ENCODE measurements at regions of chr13 and their contacts with region 1.

Region 1: GRCh38 chr13:44583137-44583536 is 7.0 kb upstream of the TSC22D1 start:
- DNase-seq: no peak
- H3K4me3 ChIP-seq: no peak overlapping the region
- H3K27ac ChIP-seq: no peak overlapping the region
- H3K4me1 ChIP-seq: peaks cover 0 to 8% (median 5%) of the 10 kb centered on the region in 4 donors
- H3K27me3 ChIP-seq: no peaks in the 10 kb centered on the region
- CTCF ChIP-seq: no peak
- EP300 ChIP-seq: no peak
- POLR2A ChIP-seq: no peak

Region 2: DNA sequence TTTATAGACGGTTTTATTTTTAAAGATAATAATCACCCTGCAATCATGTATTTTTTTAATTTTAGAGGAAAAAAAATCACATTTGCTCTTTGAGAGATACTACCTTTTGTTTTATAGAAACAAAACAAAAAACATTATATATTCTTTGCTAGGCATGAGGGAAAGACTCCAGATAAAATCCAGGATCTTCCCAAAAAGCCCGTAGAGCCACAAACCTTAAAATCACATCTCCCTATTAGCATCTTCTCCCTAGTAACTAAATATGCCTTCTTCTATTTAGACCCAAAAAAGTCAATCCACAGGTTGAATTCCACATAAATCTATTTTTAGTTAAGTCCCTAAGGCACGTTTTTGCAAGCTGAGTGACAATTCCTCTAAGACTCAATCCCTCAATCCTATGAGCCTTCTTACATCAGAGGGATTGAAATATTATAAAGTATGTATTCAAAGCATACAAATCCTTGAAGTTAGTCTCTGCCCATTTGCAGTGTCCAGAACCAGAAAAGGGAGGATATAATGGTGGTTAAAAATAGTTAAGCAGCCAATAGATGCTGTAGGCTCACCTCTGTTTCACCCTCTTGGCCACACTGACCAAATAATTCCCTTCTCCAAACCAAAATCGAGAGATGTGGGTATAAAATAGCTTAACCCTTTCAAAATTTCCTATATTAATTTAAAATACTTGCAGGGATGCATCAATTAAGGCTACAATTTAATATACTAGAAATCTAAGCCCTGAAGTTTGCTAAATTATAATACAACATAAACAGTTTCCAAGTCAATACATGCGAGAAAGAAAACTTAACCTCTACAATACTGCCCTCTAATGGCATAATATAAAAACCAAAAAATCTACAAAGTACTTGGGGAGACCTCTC is 145.5 kb before region 1 on chr13:
- in situ Hi-C with region 1: no loop called
- intact Hi-C with region 1: no loop called
- DNase-seq: no peak
- H3K4me3 ChIP-seq: peak overlapping the region in 3 of 4 donors; percentile 51 to 65 (median 52)
- H3K27ac ChIP-seq: peak overlapping the region; percentile 87 to 92 (median 90)
- H3K4me1 ChIP-seq: peaks cover 3 to 39% (median 30%) of the 10 kb centered on the region in 4 donors
- H3K27me3 ChIP-seq: no peaks in the 10 kb centered on the region
- CTCF ChIP-seq: peak; percentile 50 to 71 (median 58)
- EP300 ChIP-seq: no peak
- POLR2A ChIP-seq: no peak

Region 3: DNA sequence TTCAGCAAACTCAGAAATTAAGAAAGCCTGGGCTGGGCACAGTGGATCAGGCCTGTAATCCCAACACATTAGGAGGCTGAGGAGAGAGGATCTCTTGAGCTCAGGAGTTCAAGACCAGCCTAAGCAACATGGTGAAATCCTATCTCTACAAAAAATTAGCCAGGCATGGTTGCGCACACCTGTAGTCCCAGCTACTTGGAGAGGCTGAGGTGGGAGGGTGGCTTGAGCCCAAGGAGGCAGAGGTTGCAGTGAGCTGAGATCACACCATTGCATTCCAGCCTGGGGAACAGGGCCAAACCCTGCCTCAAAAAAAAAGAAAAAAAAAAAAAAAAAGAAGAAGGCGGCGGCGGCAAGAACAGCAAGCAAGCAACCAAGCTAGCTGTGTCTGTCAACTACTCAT is 33.7 kb before region 1 on chr13:
- in situ Hi-C with region 1: no loop called
- intact Hi-C with region 1: loop called (anchors 1 kb)
- DNase-seq: no peak
- H3K4me3 ChIP-seq: no peak overlapping the region
- H3K27ac ChIP-seq: no peak overlapping the region
- H3K4me1 ChIP-seq: no peaks in the 10 kb centered on the region
- H3K27me3 ChIP-seq: no peaks in the 10 kb centered on the region
- CTCF ChIP-seq: no peak
- EP300 ChIP-seq: no peak
- POLR2A ChIP-seq: no peak

Region 4: GRCh38 chr13:46211483-46212351 is 1628.6 kb after region 1 on chr13 and contains the start of gene LRRC63:
- in situ Hi-C with region 1: no loop called
- intact Hi-C with region 1: no loop called
- DNase-seq: peak; percentile 87
- H3K4me3 ChIP-seq: peak within 1 kb of the TSS; percentile 35 to 50 (median 38)
- H3K27ac ChIP-seq: peak within 1 kb of the TSS; percentile 32 to 53 (median 38)
- H3K4me1 ChIP-seq: peaks cover 0 to 14% (median 9%) of the 10 kb centered on the region in 4 donors
- H3K27me3 ChIP-seq: peaks cover 31% of the 10 kb centered on the region
- CTCF ChIP-seq: no peak
- EP300 ChIP-seq: no peak
- POLR2A ChIP-seq: no peak
- total RNA-seq, gene LRRC63: 0.32 TPM in 1 of 4 donors, not detected in the others

Measured in transverse colon (tissue), 4 donors.